ENCODE measurements at regions of chr7 and their contacts with region 1.

Region 1: DNA sequence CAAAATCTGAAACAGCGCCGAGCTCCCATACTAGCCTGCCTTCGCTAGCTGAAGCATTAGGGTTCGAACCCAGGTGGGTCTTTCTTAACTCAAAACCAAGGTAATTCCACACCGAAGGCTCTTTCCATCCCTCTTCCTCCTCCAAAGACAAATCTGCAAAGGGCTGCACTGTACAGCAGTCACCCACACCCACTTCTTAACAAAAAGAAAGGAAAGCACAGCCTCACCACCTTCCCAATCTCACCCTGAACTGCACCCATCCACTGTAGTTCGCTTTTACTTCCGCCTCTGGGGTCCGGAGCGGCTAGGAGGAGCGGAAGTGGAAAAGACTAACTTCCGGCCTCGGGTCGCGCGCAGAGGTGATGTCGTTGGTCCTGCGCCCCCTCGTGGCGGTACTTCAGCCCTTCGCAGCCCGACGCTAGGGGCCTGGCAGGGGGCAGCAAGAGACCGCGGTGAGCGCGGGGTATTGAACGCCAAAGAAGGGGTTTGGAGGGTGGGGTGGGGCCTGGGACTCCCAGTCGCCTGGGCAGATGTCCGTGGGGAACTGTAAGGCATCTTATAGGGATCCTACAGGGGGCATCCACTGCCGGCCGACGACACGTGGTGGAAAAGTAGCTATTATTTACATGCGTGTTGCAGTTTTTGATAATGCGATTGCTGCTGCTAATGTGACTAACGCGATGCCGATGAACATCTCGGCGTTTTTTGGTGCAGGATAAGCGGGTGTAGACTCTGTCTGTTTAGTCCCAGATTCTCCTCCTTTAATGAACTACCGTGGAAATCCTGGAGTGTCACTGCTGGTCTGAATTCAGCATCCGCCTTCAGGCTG is at the start of gene MTERF1:
- DNase-seq: peak; percentile 90
- H3K4me3 ChIP-seq: peak within 1 kb of the TSS; percentile 61 to 95 (median 81)
- H3K27ac ChIP-seq: peak within 1 kb of the TSS; percentile 36
- H3K4me1 ChIP-seq: peaks cover 11% of the 10 kb centered on the region
- H3K27me3 ChIP-seq: no peaks in the 10 kb centered on the region
- CTCF ChIP-seq: peak; percentile 96 to 98
- POLR2A ChIP-seq: peak; percentile 90
- total RNA-seq, gene MTERF1: 10.2 TPM in 2 replicates

Region 2: GRCh38 chr7:90346336-90347125 is 1534.1 kb before region 1 on chr7 and contains the start of gene GTPBP10:
- CTCF ChIA-PET with region 1: no interaction called
- POLR2A ChIA-PET with region 1: no interaction called
- dilution Hi-C with region 1: no loop called
- intact Hi-C with region 1: loop called (anchors 10 kb)
- DNase-seq: peak; percentile 97
- H3K4me3 ChIP-seq: peak within 1 kb of the TSS; percentile 88 to 95 (median 91)
- H3K27ac ChIP-seq: peak within 1 kb of the TSS; percentile 57
- H3K4me1 ChIP-seq: peaks cover 12% of the 10 kb centered on the region
- H3K27me3 ChIP-seq: no peaks in the 10 kb centered on the region
- CTCF ChIP-seq: peak; percentile 69 to 71
- POLR2A ChIP-seq: peak; percentile 95
- total RNA-seq, gene GTPBP10: 14.6 and 16.7 TPM in 2 replicates

Region 3: GRCh38 chr7:91082852-91083495 is 797.7 kb before region 1 on chr7:
- CTCF ChIA-PET with region 1: interaction called, 12 read pairs
- POLR2A ChIA-PET with region 1: no interaction called
- dilution Hi-C with region 1: no loop called
- intact Hi-C with region 1: loop called (anchors 1 kb)
- DNase-seq: peak; percentile 41
- H3K4me3 ChIP-seq: no peak overlapping the region
- H3K27ac ChIP-seq: no peak overlapping the region
- H3K4me1 ChIP-seq: no peaks in the 10 kb centered on the region
- H3K27me3 ChIP-seq: no peaks in the 10 kb centered on the region
- CTCF ChIP-seq: peak; percentile 31 to 47
- POLR2A ChIP-seq: no peak

Region 4: GRCh38 chr7:91264046-91264923 is 616.3 kb before region 1 on chr7 and contains the start of gene FZD1:
- CTCF ChIA-PET with region 1: no interaction called
- POLR2A ChIA-PET with region 1: no interaction called
- dilution Hi-C with region 1: no loop called
- intact Hi-C with region 1: loop called (anchors 1 kb)
- DNase-seq: peak; percentile 98
- H3K4me3 ChIP-seq: peak within 1 kb of the TSS; percentile 50 to 85 (median 71)
- H3K27ac ChIP-seq: peak within 1 kb of the TSS; percentile 65
- H3K4me1 ChIP-seq: peaks cover 6% of the 10 kb centered on the region
- H3K27me3 ChIP-seq: peaks cover 1 to 5% of the 10 kb centered on the region in 2 experiments
- CTCF ChIP-seq: peak in 1 of 2 donors; percentile 35
- POLR2A ChIP-seq: no peak
- total RNA-seq, gene FZD1: 3.2 and 3.4 TPM in 2 replicates

Region 5: DNA sequence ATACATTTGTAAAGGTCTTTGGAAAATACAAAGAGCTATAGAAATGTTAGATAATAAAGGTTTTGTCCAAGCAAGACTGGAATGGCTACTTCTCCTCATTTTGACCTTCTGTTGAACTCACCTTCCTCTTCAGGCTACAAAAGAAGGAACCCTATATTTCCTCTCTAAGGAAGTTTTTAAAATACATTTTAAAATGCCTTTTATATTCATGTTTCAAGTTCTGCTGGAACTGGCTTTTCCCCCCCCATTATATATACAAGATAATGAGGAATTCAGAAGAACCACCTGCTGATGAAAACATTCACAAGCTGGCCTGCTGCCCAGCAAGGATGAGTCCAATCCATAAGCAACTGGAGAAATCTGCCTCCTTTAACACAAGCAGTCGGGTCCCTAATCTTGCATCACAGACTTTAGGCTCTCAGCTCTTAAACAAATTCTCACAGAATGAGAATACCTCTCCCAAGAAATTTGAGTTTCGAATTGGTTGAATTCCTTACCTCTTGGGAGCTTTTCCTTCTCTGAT is 44.7 kb before region 1 on chr7:
- CTCF ChIA-PET with region 1: interaction called, 48 read pairs
- POLR2A ChIA-PET with region 1: no interaction called
- dilution Hi-C with region 1: no loop called
- intact Hi-C with region 1: no loop called
- DNase-seq: peak; percentile 14
- H3K4me3 ChIP-seq: no peak overlapping the region
- H3K27ac ChIP-seq: no peak overlapping the region
- H3K4me1 ChIP-seq: no peaks in the 10 kb centered on the region
- H3K27me3 ChIP-seq: no peaks in the 10 kb centered on the region
- CTCF ChIP-seq: no peak
- POLR2A ChIP-seq: no peak

Region 6: GRCh38 chr7:91869661-91870060 is 11.0 kb before region 1 on chr7:
- CTCF ChIA-PET with region 1: interaction called, 10 read pairs
- POLR2A ChIA-PET with region 1: no interaction called
- dilution Hi-C with region 1: no loop called
- intact Hi-C with region 1: no loop called
- DNase-seq: no peak
- H3K4me3 ChIP-seq: no peak overlapping the region
- H3K27ac ChIP-seq: no peak overlapping the region
- H3K4me1 ChIP-seq: no peaks in the 10 kb centered on the region
- H3K27me3 ChIP-seq: no peaks in the 10 kb centered on the region
- CTCF ChIP-seq: no peak
- POLR2A ChIP-seq: no peak

Region 7: GRCh38 chr7:91940572-91941341 is 60.1 kb after region 1 on chr7 and contains the start of gene AKAP9:
- CTCF ChIA-PET with region 1: interaction called, 9 read pairs
- POLR2A ChIA-PET with region 1: no interaction called
- dilution Hi-C with region 1: no loop called
- intact Hi-C with region 1: loop called (anchors 2 kb)
- DNase-seq: peak; percentile 89
- H3K4me3 ChIP-seq: peak within 1 kb of the TSS; percentile 84 to 95 (median 94)
- H3K27ac ChIP-seq: peak within 1 kb of the TSS; percentile 62
- H3K4me1 ChIP-seq: peaks cover 16% of the 10 kb centered on the region
- H3K27me3 ChIP-seq: no peaks in the 10 kb centered on the region
- CTCF ChIP-seq: no peak
- POLR2A ChIP-seq: peak; percentile 59
- total RNA-seq, gene AKAP9: 41.8 and 51.6 TPM in 2 replicates

Region 8: GRCh38 chr7:92108821-92109220 is 228.2 kb after region 1 on chr7:
- CTCF ChIA-PET with region 1: no interaction called
- POLR2A ChIA-PET with region 1: no interaction called
- dilution Hi-C with region 1: no loop called
- intact Hi-C with region 1: no loop called
- DNase-seq: no peak
- H3K4me3 ChIP-seq: no peak overlapping the region
- H3K27ac ChIP-seq: no peak overlapping the region
- H3K4me1 ChIP-seq: no peaks in the 10 kb centered on the region
- H3K27me3 ChIP-seq: no peaks in the 10 kb centered on the region
- CTCF ChIP-seq: no peak
- POLR2A ChIP-seq: no peak